Activated CD8-positive, alpha-beta memory T cell treated with anti-CD3 and anti-CD28 coated beads, Interleukin-2, amount 10 ng/mL, durations not matched to agents 7 days and 5 days (primary cell): ENCODE measurements at regions of chr12 and their contacts with region 1.

Region 1: GRCh38 chr12:6335451-6336078 is 6.3 kb downstream of the TNFRSF1A start:
- DNase-seq: peak; percentile 95
- ATAC-seq: peak; percentile 62
- H3K4me3 Mint-ChIP-seq: no peak overlapping the region
- H3K27ac Mint-ChIP-seq: no peak overlapping the region
- H3K4me1 Mint-ChIP-seq: peaks cover 53% of the 10 kb centered on the region
- H3K27me3 Mint-ChIP-seq: no peaks in the 10 kb centered on the region

Region 2: DNA sequence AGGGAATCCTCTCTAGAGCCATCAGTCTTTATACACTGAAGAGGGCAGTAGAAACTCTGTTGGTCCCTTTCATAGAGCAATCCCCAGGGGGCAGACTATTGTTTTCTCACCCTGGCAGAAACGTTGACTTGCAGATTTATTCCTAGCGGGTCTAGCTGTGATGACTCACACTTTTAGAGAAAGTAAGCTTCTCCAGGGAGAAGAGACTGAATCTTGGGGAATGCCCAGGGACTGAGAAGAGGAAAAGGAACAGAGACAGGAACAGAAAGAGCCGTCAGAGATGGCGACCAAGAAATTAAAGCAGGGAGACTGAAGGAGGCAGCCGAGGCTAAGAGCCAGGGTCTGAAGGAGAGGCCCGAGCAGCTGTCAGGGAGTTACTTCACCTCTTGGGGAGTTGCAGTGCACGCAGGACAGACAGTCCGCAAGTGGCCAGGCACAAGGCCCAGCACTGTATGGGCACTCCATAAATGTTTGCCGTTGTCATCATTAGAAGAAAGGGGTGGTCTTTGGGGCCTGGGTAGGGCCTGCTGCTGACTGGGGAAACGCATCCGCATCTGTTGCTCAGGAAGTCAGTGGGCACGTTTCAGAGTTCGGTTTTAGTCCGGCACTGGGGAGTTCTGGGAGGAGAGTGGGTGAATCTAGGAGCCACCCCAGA is 12.1 kb before region 1 on chr12:
- CTCF ChIA-PET with region 1: interaction called, 22 read pairs
- DNase-seq: peak; percentile 65
- ATAC-seq: peak; percentile 83
- H3K4me3 Mint-ChIP-seq: peak overlapping the region; percentile 56
- H3K27ac Mint-ChIP-seq: peak overlapping the region; percentile 92
- H3K4me1 Mint-ChIP-seq: peaks cover 43% of the 10 kb centered on the region
- H3K27me3 Mint-ChIP-seq: no peaks in the 10 kb centered on the region

Region 3: GRCh38 chr12:6355491-6356371 is 20.2 kb after region 1 on chr12:
- CTCF ChIA-PET with region 1: interaction called, 32 read pairs
- DNase-seq: no peak
- ATAC-seq: no peak
- H3K4me3 Mint-ChIP-seq: no peak overlapping the region
- H3K27ac Mint-ChIP-seq: no peak overlapping the region
- H3K4me1 Mint-ChIP-seq: peaks cover 6% of the 10 kb centered on the region
- H3K27me3 Mint-ChIP-seq: peaks cover 13% of the 10 kb centered on the region

Region 4: GRCh38 chr12:6367065-6367968 is 31.8 kb after region 1 on chr12:
- CTCF ChIA-PET with region 1: interaction called, 107 read pairs
- DNase-seq: peak; percentile 67
- ATAC-seq: peak; percentile 62
- H3K4me3 Mint-ChIP-seq: no peak overlapping the region
- H3K27ac Mint-ChIP-seq: peak overlapping the region; percentile 68
- H3K4me1 Mint-ChIP-seq: peaks cover 26% of the 10 kb centered on the region
- H3K27me3 Mint-ChIP-seq: no peaks in the 10 kb centered on the region

Region 5: GRCh38 chr12:6461401-6462233 is 126.1 kb after region 1 on chr12:
- CTCF ChIA-PET with region 1: interaction called, 17 read pairs
- DNase-seq: peak; percentile 97
- ATAC-seq: peak; percentile 82
- H3K4me3 Mint-ChIP-seq: peak overlapping the region; percentile 72
- H3K27ac Mint-ChIP-seq: peak overlapping the region; percentile 98
- H3K4me1 Mint-ChIP-seq: peaks cover 87% of the 10 kb centered on the region
- H3K27me3 Mint-ChIP-seq: no peaks in the 10 kb centered on the region